Heart right ventricle (tissue), 16 donors: ENCODE measurements at regions of chr1 and their contacts with region 1.

Region 1: GRCh38 chr1:45954401-45954847 is 151.0 kb downstream of the MAST2 start:
- DNase-seq: peak in 1 of 2 donors; percentile 7
- ATAC-seq: peak in 7 of 8 donors; percentile 43 to 77 (median 61)
- H3K4me3 ChIP-seq: no peak overlapping the region
- H3K27ac ChIP-seq: peak overlapping the region in 9 of 10 donors; percentile 11 to 73 (median 59)
- H3K4me1 ChIP-seq: peaks cover 0 to 29% (median 11%) of the 10 kb centered on the region in 9 donors
- H3K27me3 ChIP-seq: no peaks in the 10 kb centered on the region
- CTCF ChIP-seq: no peak

Region 2: DNA sequence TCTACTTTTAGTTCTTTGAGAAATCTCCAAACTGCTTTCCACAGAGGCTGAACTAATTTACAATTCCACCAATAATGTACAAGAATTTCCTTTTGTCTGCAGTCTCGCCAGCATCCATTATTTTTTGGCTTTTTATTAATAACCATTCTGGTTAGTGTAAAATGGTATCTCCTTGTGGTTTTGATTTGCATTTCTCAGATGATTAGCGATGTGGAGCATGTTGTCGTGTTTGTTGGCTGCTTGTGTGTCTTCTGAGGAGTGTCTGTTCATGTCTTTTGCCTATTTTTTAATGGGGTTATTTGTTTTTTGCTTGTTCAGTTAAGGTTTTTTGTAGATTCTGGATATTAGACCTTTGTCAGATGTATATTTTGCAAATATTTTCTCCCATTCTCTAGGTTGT is 19.5 kb before region 1 on chr1:
- intact Hi-C with region 1: loop called in 1 of 10 experiments (anchors 1 kb)
- DNase-seq: no peak
- ATAC-seq: no peak
- H3K4me3 ChIP-seq: no peak overlapping the region
- H3K27ac ChIP-seq: no peak overlapping the region
- H3K4me1 ChIP-seq: peaks cover 0 to 13% (median 5%) of the 10 kb centered on the region in 9 donors
- H3K27me3 ChIP-seq: no peaks in the 10 kb centered on the region
- CTCF ChIP-seq: no peak

Region 3: DNA sequence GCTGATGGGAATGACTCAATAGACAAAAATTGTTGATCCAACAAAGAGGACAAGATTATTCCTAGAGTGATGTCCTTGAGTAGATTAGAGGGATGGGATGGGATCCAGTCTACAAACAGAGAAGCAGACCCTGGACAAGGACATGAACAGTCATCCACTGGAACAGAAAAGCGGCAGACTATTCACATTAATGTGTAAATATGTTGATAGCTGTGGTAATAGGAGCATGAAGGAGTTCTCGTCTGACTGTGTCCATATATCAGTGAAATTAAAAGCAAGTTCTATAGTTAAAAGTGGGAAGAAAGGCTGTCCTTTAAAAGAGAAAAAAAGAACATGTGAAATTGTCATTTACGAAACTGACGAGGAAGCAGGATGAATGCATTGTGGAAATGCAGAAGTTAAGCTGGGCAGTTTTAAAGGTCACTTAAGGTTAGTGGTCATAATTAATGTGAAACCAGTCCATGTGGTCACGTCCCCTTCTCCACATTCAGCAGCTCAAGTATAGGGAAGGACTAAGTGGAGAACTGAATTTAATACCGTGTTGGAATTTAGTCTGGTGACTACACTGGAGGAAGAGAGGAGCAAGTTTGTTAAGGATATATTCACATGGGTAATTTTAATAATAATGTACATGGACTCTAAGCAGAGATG is 115.9 kb after region 1 on chr1:
- intact Hi-C with region 1: no loop called
- DNase-seq: no peak
- ATAC-seq: peak in 7 of 8 donors; percentile 46 to 76 (median 66)
- H3K4me3 ChIP-seq: peak overlapping the region in 1 of 10 donors; percentile 5
- H3K27ac ChIP-seq: peak overlapping the region in 2 of 10 donors; percentile 12 to 68
- H3K4me1 ChIP-seq: peaks cover 0 to 31% (median 12%) of the 10 kb centered on the region in 9 donors
- H3K27me3 ChIP-seq: no peaks in the 10 kb centered on the region
- CTCF ChIP-seq: no peak

Region 4: DNA sequence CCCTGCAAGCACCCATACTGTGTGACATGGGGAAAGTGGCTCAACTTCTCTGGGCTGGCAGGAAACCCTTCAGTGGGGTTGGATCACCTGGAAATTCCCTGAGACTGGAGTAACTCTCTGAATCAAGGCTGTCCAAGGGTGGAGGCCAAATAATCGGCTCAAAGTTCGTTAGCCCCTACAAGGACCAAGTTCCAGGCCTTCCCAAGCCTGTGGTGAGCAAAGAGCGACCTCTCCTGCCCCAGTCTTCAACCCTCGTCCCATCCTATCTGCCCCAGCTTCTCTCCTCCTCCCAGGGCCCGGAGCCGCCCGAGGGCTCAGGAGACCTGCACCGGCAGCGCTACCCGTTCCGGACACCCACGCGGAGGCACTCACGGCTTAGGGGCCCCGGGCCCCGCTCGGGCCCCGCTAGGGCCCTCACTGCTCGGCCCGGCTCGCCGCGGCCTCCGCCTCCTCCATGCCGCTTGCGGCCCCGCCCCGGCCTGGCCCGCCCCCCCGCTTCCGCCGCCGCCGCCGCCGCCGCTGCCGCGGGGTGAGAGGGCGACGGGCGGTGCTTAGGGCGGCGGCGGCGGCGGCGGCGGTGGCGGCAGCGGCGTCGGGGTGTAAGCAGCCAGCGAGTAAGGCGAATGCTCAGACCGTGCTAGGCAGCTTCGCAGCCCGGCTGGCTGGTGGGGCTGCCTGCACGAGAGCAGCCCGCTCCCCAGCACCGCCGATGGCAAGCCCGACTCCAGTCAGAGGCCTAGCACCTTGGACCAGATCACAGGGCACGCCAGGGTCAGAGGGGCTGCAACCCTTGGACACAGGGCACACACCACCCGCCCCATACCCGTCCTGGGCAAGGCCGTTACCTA is 243.8 kb after region 1 on chr1 and contains the start of gene POMGNT1:
- intact Hi-C with region 1: no loop called
- DNase-seq: peak; percentile 51 to 79
- ATAC-seq: peak; percentile 72 to 94 (median 80)
- H3K4me3 ChIP-seq: peak within 1 kb of the TSS; percentile 62 to 95 (median 77)
- H3K27ac ChIP-seq: peak within 1 kb of the TSS in 9 of 10 donors; percentile 84 to 91 (median 89)
- H3K4me1 ChIP-seq: peaks cover 16 to 52% (median 41%) of the 10 kb centered on the region in 9 donors
- H3K27me3 ChIP-seq: no peaks in the 10 kb centered on the region
- CTCF ChIP-seq: peak in 4 of 9 donors; percentile 33 to 48 (median 40)
- total RNA-seq, gene POMGNT1: 125 to 164 (median 147) TPM